Spleen (tissue), 13 donors: ENCODE measurements at regions of chr7 and their contacts with region 1.

Region 1: DNA sequence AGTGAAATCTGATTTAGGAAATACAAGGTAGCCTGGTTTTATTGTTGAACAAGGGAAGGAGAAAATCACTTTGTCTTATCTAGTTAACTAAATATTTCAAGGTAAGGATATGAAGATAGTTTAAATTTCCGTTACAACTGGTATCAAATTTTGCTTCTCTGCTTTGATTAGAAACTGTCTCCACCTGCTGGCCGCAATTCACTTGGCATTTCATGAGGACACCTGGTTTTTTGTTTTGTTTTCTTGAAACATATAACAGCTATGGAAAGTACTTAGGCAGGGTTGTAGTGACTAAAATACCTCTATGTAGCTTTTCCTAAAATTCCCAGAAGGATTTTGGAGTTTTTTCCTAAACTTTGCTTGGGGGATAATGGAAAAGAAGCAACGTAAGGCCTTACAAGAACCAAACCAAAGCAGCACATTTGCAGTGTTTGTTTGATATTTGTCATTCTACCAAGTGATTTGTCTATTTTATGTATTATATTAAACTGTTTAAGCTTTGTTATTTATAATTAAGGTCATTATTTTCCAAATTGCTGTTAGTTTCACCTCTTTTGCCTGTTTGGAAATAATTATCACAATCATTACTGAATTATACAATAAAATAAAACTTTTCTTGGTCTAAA is 73.6 kb downstream of the AHCYL2 start:
- DNase-seq: no peak
- H3K4me3 ChIP-seq: no peak overlapping the region
- H3K27ac ChIP-seq: no peak overlapping the region
- H3K4me1 ChIP-seq: peaks cover 0 to 8% (median 0%) of the 10 kb centered on the region in 6 donors
- H3K27me3 ChIP-seq: no peaks in the 10 kb centered on the region
- CTCF ChIP-seq: peak; percentile 32 to 69 (median 56)
- POLR2A ChIP-seq: no peak

Region 2: GRCh38 chr7:129218514-129219062 is 79.8 kb before region 1 on chr7:
- intact Hi-C with region 1: loop called (anchors 2 kb)
- DNase-seq: peak; percentile 89
- H3K4me3 ChIP-seq: no peak overlapping the region
- H3K27ac ChIP-seq: no peak overlapping the region
- H3K4me1 ChIP-seq: peaks cover 0 to 30% (median 18%) of the 10 kb centered on the region in 6 donors
- H3K27me3 ChIP-seq: peaks cover 0 to 12% (median 0%) of the 10 kb centered on the region in 7 donors
- CTCF ChIP-seq: peak; percentile 72 to 91 (median 85)
- POLR2A ChIP-seq: no peak